Ascending aorta (tissue), 2 donors: ENCODE measurements at regions of chr11 and their contacts with region 1.

Region 1: DNA sequence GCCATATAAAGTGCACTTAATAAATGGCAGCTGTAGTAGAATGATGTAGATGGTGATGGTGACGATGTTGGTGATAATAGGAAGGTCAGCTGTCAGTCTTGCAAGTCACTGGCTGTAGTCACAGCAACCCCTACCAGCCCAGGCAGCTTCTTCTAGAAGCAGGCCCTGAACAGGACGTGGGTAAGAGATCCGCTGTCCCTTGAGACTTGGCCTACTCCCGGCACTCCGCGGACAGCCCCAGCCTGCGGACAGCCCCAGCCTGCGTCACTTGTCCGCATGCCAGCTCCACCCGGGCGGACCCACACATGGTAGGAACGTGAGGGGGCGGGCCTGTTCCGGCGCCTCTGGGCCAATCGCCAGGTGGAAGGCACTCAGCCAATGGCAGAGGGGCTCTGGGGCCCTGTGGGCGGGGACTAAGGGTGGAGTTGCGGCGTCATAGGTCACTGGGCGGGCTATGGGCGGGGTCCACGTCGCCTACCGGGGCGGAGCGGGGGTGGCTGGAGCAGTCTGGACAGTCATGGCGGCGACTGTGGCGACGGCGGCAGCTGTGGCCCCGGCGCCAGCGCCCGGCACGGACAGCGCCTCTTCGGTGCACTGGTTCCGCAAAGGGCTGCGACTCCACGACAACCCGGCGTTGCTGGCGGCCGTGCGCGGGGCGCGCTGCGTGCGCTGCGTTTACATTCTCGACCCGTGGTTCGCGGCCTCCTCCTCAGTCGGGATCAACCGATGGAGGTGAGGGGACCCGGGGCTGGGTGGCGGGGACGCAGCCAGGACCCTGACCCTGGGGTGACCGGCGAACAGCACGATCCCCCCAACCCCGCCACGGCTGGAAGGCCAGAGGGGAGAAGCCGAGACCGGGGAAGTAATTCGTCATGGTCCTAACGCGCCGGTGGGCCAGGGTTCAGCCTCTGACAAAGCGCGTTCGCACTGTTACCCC is at the start of gene CRY2:
- DNase-seq: peak; percentile 98 to 100
- H3K4me3 ChIP-seq: peak within 1 kb of the TSS; percentile 92 to 97
- H3K27ac ChIP-seq: peak within 1 kb of the TSS; percentile 97 to 98
- H3K4me1 ChIP-seq: peaks cover 12 to 44% of the 10 kb centered on the region in 2 donors
- H3K27me3 ChIP-seq: no peaks in the 10 kb centered on the region
- CTCF ChIP-seq: no peak
- total RNA-seq, gene CRY2: 29.6 TPM

Region 2: GRCh38 chr11:45543808-45544422 is 303.3 kb before region 1 on chr11:
- intact Hi-C with region 1: no loop called
- DNase-seq: no peak
- H3K4me3 ChIP-seq: no peak overlapping the region
- H3K27ac ChIP-seq: no peak overlapping the region
- H3K4me1 ChIP-seq: no peaks in the 10 kb centered on the region
- H3K27me3 ChIP-seq: no peaks in the 10 kb centered on the region
- CTCF ChIP-seq: no peak

Region 3: DNA sequence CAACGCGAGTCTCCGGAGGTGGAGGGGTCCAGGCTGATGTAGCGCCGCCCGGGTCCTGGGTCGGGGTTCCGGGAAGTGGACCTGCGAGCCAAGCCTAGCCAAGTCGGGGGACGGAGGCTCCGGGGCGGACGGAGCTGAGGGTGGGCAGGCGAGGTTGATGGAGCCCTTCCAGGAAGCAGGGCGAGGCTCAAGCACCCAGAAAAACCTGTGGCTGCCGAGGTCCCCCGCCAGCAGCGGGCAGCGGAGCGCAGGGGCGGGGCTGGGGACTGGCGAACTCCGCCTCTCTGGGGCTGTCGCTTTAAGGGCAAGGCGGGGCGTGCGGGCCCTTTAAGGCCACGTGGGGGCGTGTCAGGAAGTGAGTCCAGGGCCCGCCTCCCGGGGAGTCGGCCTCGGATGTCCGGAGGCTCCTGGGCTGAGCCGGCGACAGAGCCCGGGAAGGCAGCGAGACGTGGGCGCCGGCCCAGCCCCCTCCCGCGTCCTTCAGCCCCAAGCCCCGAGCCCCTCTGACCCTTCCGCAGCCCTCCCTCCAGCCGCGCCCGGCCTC is 42.4 kb before region 1 on chr11 and contains the start of gene SLC35C1:
- intact Hi-C with region 1: loop called (anchors 1 kb)
- DNase-seq: peak; percentile 89 to 98
- H3K4me3 ChIP-seq: peak within 1 kb of the TSS; percentile 89 to 99
- H3K27ac ChIP-seq: peak within 1 kb of the TSS; percentile 84 to 90
- H3K4me1 ChIP-seq: peaks cover 9 to 29% of the 10 kb centered on the region in 2 donors
- H3K27me3 ChIP-seq: no peaks in the 10 kb centered on the region
- CTCF ChIP-seq: peak in 2 of 3 experiments; percentile 4 to 14
- total RNA-seq, gene SLC35C1: 47.7 TPM

Region 4: GRCh38 chr11:45899448-45900173 is 52.4 kb after region 1 on chr11:
- intact Hi-C with region 1: loop called (anchors 1 kb)
- DNase-seq: peak; percentile 62 to 91
- H3K4me3 ChIP-seq: peak overlapping the region; percentile 70 to 74
- H3K27ac ChIP-seq: peak overlapping the region; percentile 49 to 65
- H3K4me1 ChIP-seq: peaks cover 0 to 20% of the 10 kb centered on the region in 2 donors
- H3K27me3 ChIP-seq: no peaks in the 10 kb centered on the region
- CTCF ChIP-seq: no peak

Region 5: GRCh38 chr11:46006418-46007070 is 159.3 kb after region 1 on chr11:
- intact Hi-C with region 1: loop called (anchors 5 kb)
- DNase-seq: no peak
- H3K4me3 ChIP-seq: no peak overlapping the region
- H3K27ac ChIP-seq: no peak overlapping the region
- H3K4me1 ChIP-seq: peaks cover 3 to 30% of the 10 kb centered on the region in 2 donors
- H3K27me3 ChIP-seq: no peaks in the 10 kb centered on the region
- CTCF ChIP-seq: peak; percentile 54 to 81 (median 71)

Region 6: GRCh38 chr11:46238967-46239800 is 391.9 kb after region 1 on chr11:
- intact Hi-C with region 1: loop called (anchors 10 kb)
- DNase-seq: peak; percentile 50 to 93
- H3K4me3 ChIP-seq: peak overlapping the region; percentile 60 to 86
- H3K27ac ChIP-seq: no peak overlapping the region
- H3K4me1 ChIP-seq: peaks cover 12 to 20% of the 10 kb centered on the region in 2 donors
- H3K27me3 ChIP-seq: no peaks in the 10 kb centered on the region
- CTCF ChIP-seq: peak; percentile 96 to 99 (median 98)

Region 7: GRCh38 chr11:47407746-47408590 is 1560.7 kb after region 1 on chr11 and contains the start of gene SLC39A13:
- intact Hi-C with region 1: loop called (anchors 10 kb)
- DNase-seq: peak; percentile 91 to 98
- H3K4me3 ChIP-seq: peak within 1 kb of the TSS; percentile 82 to 87
- H3K27ac ChIP-seq: peak within 1 kb of the TSS; percentile 95 to 99
- H3K4me1 ChIP-seq: peaks cover 10 to 33% of the 10 kb centered on the region in 2 donors
- H3K27me3 ChIP-seq: no peaks in the 10 kb centered on the region
- CTCF ChIP-seq: peak; percentile 78 to 99 (median 85)
- total RNA-seq, gene SLC39A13: 246 TPM